Caco-2 (cell line): ENCODE measurements at regions of chr20 and their contacts with region 1.

Region 1: GRCh38 chr20:33191490-33191889 is 23.5 kb downstream of the BPIFA2 start:
- DNase-seq: no peak
- H3K4me3 ChIP-seq: no peak overlapping the region
- H3K4me3 Mint-ChIP-seq: no peak overlapping the region
- H3K27ac Mint-ChIP-seq: no peak overlapping the region
- H3K4me1 ChIP-seq: peaks cover 11% of the 10 kb centered on the region
- H3K4me1 Mint-ChIP-seq: no peaks in the 10 kb centered on the region
- H3K27me3 ChIP-seq: no peaks in the 10 kb centered on the region
- H3K27me3 Mint-ChIP-seq: peaks cover 5% of the 10 kb centered on the region
- CTCF ChIP-seq: no peak

Region 2: GRCh38 chr20:33178726-33179125 is 12.8 kb before region 1 on chr20:
- CTCF ChIA-PET with region 1: interaction called, 3 read pairs
- POLR2A ChIA-PET with region 1: interaction called, 3 read pairs
- intact Hi-C with region 1: loop called (anchors 1 kb)
- DNase-seq: peak; percentile 96 to 100
- H3K4me3 ChIP-seq: no peak overlapping the region
- H3K4me3 Mint-ChIP-seq: peak overlapping the region; percentile 35
- H3K27ac Mint-ChIP-seq: peak overlapping the region; percentile 84
- H3K4me1 ChIP-seq: peaks cover 33% of the 10 kb centered on the region
- H3K4me1 Mint-ChIP-seq: peaks cover 33% of the 10 kb centered on the region
- H3K27me3 ChIP-seq: no peaks in the 10 kb centered on the region
- H3K27me3 Mint-ChIP-seq: no peaks in the 10 kb centered on the region
- CTCF ChIP-seq: no peak